ENCODE measurements at regions of chr12 and their contacts with region 1.

Region 1: DNA sequence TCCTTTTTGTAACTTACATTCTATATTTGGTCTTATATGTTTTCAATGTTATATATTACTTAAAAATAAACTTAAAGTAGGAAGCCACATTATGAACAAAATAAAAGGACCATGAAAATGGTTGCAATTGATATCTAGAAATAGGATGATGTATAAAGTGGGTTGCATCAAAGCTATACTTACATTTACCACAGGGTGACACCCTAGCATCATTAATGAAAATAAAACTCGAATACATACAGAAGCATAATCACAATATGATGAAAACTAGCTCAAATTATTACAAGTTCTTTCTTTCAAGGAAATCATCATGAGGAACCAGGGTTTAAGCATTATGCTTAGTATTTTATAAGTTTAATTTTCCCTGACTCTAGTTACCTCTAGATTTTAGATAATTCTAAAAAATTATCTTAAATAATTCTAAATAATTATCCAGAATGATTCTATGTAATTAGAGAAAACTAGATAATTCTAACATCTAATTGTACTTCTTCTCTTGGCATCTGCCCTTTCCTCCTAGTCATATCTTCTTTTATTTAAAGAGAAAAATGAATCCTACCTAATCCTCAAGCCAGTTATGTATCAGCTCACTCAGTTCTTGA is 31.2 kb downstream of the TAS2R7 start:
- DNase-seq: peak in 1 of 2 experiments; percentile 43
- H3K4me3 ChIP-seq: no peak overlapping the region
- H3K4me3 Mint-ChIP-seq: no peak overlapping the region
- H3K27ac Mint-ChIP-seq: no peak overlapping the region
- H3K4me1 ChIP-seq: no peaks in the 10 kb centered on the region
- H3K4me1 Mint-ChIP-seq: no peaks in the 10 kb centered on the region
- H3K27me3 ChIP-seq: peaks cover 3% of the 10 kb centered on the region; the same call in 1 of the 2 replicates
- H3K27me3 Mint-ChIP-seq: peaks cover 39% of the 10 kb centered on the region
- CTCF ChIP-seq: peak; percentile 52 to 78

Region 2: GRCh38 chr12:10801741-10802140 is 30.5 kb after region 1 on chr12:
- CTCF ChIA-PET with region 1: no interaction called
- POLR2A ChIA-PET with region 1: no interaction called
- intact Hi-C with region 1: no loop called
- DNase-seq: no peak
- H3K4me3 ChIP-seq: no peak overlapping the region
- H3K4me3 Mint-ChIP-seq: no peak overlapping the region
- H3K27ac Mint-ChIP-seq: no peak overlapping the region
- H3K4me1 ChIP-seq: no peaks in the 10 kb centered on the region
- H3K4me1 Mint-ChIP-seq: no peaks in the 10 kb centered on the region
- H3K27me3 ChIP-seq: peaks cover 2% of the 10 kb centered on the region; the same call in 1 of the 2 replicates
- H3K27me3 Mint-ChIP-seq: peaks cover 28% of the 10 kb centered on the region
- CTCF ChIP-seq: no peak

Region 3: GRCh38 chr12:10901427-10901826 is 130.2 kb after region 1 on chr12:
- CTCF ChIA-PET with region 1: interaction called, 3 read pairs
- POLR2A ChIA-PET with region 1: no interaction called
- intact Hi-C with region 1: loop called (anchors 1 kb)
- DNase-seq: peak in 1 of 2 experiments; percentile 36
- H3K4me3 ChIP-seq: no peak overlapping the region
- H3K4me3 Mint-ChIP-seq: no peak overlapping the region
- H3K27ac Mint-ChIP-seq: peak overlapping the region; percentile 52
- H3K4me1 ChIP-seq: no peaks in the 10 kb centered on the region
- H3K4me1 Mint-ChIP-seq: peaks cover 7% of the 10 kb centered on the region
- H3K27me3 ChIP-seq: no peaks in the 10 kb centered on the region
- H3K27me3 Mint-ChIP-seq: no peaks in the 10 kb centered on the region
- CTCF ChIP-seq: peak; percentile 54 to 55

Region 4: GRCh38 chr12:11202811-11203210 is 431.6 kb after region 1 on chr12:
- CTCF ChIA-PET with region 1: interaction called, 34 read pairs
- POLR2A ChIA-PET with region 1: no interaction called
- intact Hi-C with region 1: loop called (anchors 1 kb)
- DNase-seq: no peak
- H3K4me3 ChIP-seq: no peak overlapping the region
- H3K4me3 Mint-ChIP-seq: no peak overlapping the region
- H3K27ac Mint-ChIP-seq: no peak overlapping the region
- H3K4me1 ChIP-seq: no peaks in the 10 kb centered on the region
- H3K4me1 Mint-ChIP-seq: no peaks in the 10 kb centered on the region
- H3K27me3 ChIP-seq: no peaks in the 10 kb centered on the region
- H3K27me3 Mint-ChIP-seq: peaks cover 2% of the 10 kb centered on the region
- CTCF ChIP-seq: no peak

Region 5: GRCh38 chr12:11228296-11228879 is 457.2 kb after region 1 on chr12:
- CTCF ChIA-PET with region 1: interaction called, 12 read pairs
- POLR2A ChIA-PET with region 1: no interaction called
- intact Hi-C with region 1: loop called (anchors 1 kb)
- DNase-seq: peak; percentile 71 to 81
- H3K4me3 ChIP-seq: no peak overlapping the region
- H3K4me3 Mint-ChIP-seq: no peak overlapping the region
- H3K27ac Mint-ChIP-seq: no peak overlapping the region
- H3K4me1 ChIP-seq: no peaks in the 10 kb centered on the region
- H3K4me1 Mint-ChIP-seq: no peaks in the 10 kb centered on the region
- H3K27me3 ChIP-seq: no peaks in the 10 kb centered on the region
- H3K27me3 Mint-ChIP-seq: peaks cover 14% of the 10 kb centered on the region
- CTCF ChIP-seq: peak; percentile 93

Region 6: DNA sequence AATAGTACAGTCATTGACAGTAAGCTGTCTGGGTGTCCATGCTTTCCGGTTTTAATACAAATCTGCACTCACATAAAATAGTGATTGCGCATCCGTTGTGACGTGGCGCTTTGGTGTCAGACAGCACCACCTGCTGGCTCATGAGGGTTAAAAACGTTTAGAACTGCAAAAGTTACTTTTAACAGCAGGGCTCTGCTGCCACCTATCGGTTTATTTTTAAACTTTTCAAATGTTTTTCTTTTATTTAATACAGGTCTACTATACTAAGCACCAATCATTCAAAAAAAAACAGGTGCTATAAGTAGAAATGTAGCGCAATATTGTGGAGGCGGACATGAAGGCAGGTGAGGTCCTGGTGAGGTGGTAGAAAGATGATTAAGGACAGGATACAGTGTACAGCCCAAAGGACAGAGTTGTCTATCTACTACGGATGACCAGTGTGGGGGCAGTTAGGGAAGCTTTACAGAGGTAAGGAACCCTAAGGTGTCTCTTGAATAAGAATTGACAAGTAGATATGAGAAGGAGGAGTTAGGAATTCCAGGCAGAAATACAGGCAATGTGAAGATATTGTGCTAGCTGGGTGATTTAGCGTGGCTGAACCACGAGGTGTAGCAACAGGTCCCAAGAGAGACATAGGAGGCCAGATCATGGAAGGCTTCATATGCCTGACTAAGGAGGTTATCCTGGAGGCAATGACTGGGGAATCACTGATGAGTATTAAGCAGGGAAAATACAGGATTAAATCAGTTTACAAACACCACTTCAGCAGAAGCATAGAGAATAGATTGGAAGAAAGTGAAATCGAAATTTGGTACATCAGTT is 715.6 kb after region 1 on chr12:
- CTCF ChIA-PET with region 1: interaction called, 9 read pairs
- POLR2A ChIA-PET with region 1: no interaction called
- intact Hi-C with region 1: loop called (anchors 1 kb)
- DNase-seq: peak; percentile 83 to 85
- H3K4me3 ChIP-seq: no peak overlapping the region
- H3K4me3 Mint-ChIP-seq: no peak overlapping the region
- H3K27ac Mint-ChIP-seq: no peak overlapping the region
- H3K4me1 ChIP-seq: no peaks in the 10 kb centered on the region
- H3K4me1 Mint-ChIP-seq: no peaks in the 10 kb centered on the region
- H3K27me3 ChIP-seq: no peaks in the 10 kb centered on the region; the same call in 1 of the 2 replicates
- H3K27me3 Mint-ChIP-seq: peaks cover 11% of the 10 kb centered on the region
- CTCF ChIP-seq: peak; percentile 96 to 100

Region 7: DNA sequence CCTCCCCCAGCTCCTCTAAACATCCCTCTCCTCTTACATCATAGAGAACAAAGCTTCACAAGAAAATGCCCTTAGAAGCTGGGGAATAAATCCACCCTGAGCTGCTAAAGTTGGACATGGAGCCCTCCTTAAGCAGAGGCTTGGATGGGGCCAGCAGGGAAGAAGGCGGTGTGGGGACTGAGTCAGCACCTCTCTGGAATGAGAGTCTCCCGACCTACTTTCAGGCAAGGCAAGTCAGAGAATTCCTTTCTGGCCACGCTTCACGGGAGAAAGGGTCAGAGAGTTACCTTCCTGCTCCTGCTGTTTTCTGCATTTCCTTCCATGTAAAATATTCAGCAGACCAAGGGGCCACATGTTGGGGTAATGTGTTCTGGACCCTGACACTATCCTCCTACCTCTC is 737.5 kb after region 1 on chr12:
- CTCF ChIA-PET with region 1: interaction called, 7 read pairs
- POLR2A ChIA-PET with region 1: no interaction called
- intact Hi-C with region 1: loop called (anchors 5 kb)
- DNase-seq: no peak
- H3K4me3 ChIP-seq: no peak overlapping the region
- H3K4me3 Mint-ChIP-seq: no peak overlapping the region
- H3K27ac Mint-ChIP-seq: no peak overlapping the region
- H3K4me1 ChIP-seq: no peaks in the 10 kb centered on the region
- H3K4me1 Mint-ChIP-seq: no peaks in the 10 kb centered on the region
- H3K27me3 ChIP-seq: no peaks in the 10 kb centered on the region
- H3K27me3 Mint-ChIP-seq: peaks cover 29% of the 10 kb centered on the region
- CTCF ChIP-seq: no peak

Measured in Caco-2 (cell line).